ENCODE measurements at regions of chr3 and their contacts with region 1.

Region 1: GRCh38 chr3:151918253-151919029 is 45.0 kb downstream of the SUCNR1 start:
- DNase-seq: no peak
- H3K4me3 Mint-ChIP-seq: no peak overlapping the region
- H3K27ac Mint-ChIP-seq: no peak overlapping the region
- H3K4me1 Mint-ChIP-seq: no peaks in the 10 kb centered on the region
- H3K27me3 Mint-ChIP-seq: no peaks in the 10 kb centered on the region
- CTCF ChIP-seq: peak; percentile 64

Region 2: DNA sequence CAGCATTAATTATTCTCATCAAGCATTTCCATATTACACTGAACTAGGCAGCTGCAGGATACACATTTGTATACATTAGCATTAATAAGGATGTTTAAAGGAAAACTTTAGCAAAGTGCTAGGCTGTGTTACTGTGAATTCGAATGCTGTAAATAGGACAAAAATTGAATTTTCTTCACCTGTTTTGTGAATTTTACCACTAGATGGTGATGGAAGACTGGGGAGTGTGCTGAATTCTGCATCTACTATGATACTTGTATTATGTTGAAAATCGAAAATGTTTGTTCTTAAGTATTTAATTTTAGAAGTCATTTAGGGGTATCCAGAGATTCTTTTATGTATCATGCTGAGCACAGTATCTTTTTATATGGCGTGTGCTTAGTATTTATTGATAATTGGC is 627.8 kb before region 1 on chr3:
- CTCF ChIA-PET with region 1: no interaction called
- intact Hi-C with region 1: loop called (anchors 1 kb)
- DNase-seq: peak; percentile 25
- H3K4me3 Mint-ChIP-seq: no peak overlapping the region
- H3K27ac Mint-ChIP-seq: no peak overlapping the region
- H3K4me1 Mint-ChIP-seq: no peaks in the 10 kb centered on the region
- H3K27me3 Mint-ChIP-seq: no peaks in the 10 kb centered on the region
- CTCF ChIP-seq: peak; percentile 63

Region 3: GRCh38 chr3:151468284-151468917 is 450.0 kb before region 1 on chr3:
- CTCF ChIA-PET with region 1: no interaction called
- intact Hi-C with region 1: loop called (anchors 1 kb)
- DNase-seq: peak; percentile 78
- H3K4me3 Mint-ChIP-seq: no peak overlapping the region
- H3K27ac Mint-ChIP-seq: no peak overlapping the region
- H3K4me1 Mint-ChIP-seq: no peaks in the 10 kb centered on the region
- H3K27me3 Mint-ChIP-seq: no peaks in the 10 kb centered on the region
- CTCF ChIP-seq: peak; percentile 93

Region 4: DNA sequence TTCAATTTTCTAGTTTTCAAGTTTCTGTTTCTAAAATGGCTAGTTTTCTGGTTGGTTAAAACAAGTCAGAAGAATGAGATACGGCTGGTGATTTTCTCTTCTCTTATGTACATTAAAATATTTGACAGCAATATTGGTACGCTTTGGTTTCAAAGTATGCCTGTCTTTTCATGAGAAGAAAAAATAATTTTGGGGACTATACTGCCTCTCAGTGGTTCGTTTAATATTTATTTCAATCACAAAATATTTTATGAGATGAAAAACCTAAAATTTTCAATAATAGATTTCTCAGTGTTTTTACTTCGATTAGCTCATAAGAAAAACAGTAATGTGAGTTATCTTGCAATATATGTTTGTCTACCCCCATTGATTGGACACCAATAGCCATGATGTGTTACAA is 257.6 kb before region 1 on chr3:
- CTCF ChIA-PET with region 1: no interaction called
- intact Hi-C with region 1: loop called (anchors 10 kb)
- DNase-seq: no peak
- H3K4me3 Mint-ChIP-seq: no peak overlapping the region
- H3K27ac Mint-ChIP-seq: no peak overlapping the region
- H3K4me1 Mint-ChIP-seq: no peaks in the 10 kb centered on the region
- H3K27me3 Mint-ChIP-seq: no peaks in the 10 kb centered on the region
- CTCF ChIP-seq: no peak

Region 5: GRCh38 chr3:152281133-152281713 is 362.8 kb after region 1 on chr3:
- CTCF ChIA-PET with region 1: no interaction called
- intact Hi-C with region 1: no loop called
- DNase-seq: no peak
- H3K4me3 Mint-ChIP-seq: no peak overlapping the region
- H3K27ac Mint-ChIP-seq: no peak overlapping the region
- H3K4me1 Mint-ChIP-seq: peaks cover 78% of the 10 kb centered on the region
- H3K27me3 Mint-ChIP-seq: no peaks in the 10 kb centered on the region
- CTCF ChIP-seq: no peak

Measured in Calu3 (cell line).